GM12878 (cell line): ENCODE measurements at regions of chr1 and their contacts with region 1.

Region 1: DNA sequence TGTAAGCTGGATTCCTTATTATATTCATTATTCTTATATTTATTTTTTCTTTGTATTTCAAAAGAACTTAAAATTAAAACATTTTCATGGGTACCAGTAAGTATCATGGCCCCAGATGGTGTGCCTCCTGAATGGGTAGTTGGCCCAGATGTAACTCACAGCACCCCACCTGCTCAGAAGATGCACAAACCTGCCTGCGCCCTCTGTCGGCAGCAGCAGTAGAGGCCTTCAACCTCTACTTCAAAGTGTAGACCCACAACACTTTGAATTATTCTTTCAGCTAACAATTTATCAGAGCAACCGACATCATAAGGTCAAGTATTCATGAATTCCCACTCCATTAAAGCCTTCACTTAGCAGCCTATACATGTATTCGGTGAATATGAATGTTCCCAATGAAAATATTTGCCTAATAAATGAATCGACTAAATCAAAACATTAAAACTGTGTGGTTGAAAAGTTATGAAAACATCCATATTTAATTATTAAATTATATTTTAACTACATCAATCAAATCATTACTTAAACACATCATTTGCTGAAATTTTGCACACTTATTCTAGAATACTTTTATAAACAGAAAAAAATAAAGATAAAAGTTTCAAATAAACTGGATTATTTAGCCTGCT is 25.4 kb downstream of the PIGM start:
- DNase-seq: no peak
- ATAC-seq: peak; percentile 98
- H3K4me3 ChIP-seq: no peak overlapping the region
- H3K27ac ChIP-seq: no peak overlapping the region
- H3K4me1 ChIP-seq: no peaks in the 10 kb centered on the region
- H3K27me3 ChIP-seq: no peaks in the 10 kb centered on the region; a peak in 1 of 4 replicates
- CTCF ChIP-seq: peak; percentile 84 to 94 (median 94)
- EP300 ChIP-seq: no peak
- POLR2A ChIP-seq: no peak
- RAD21 ChIP-seq: peak; percentile 70

Region 2: GRCh38 chr1:159161001-159161718 is 845.3 kb before region 1 on chr1:
- CTCF ChIA-PET with region 1: interaction called, 3 read pairs
- POLR2A ChIA-PET with region 1: no interaction called
- RAD21 ChIA-PET with region 1: interaction called, 3 read pairs
- SMC1A ChIA-PET with region 1: no interaction called
- in situ Hi-C with region 1: no loop called
- intact Hi-C with region 1: loop called (anchors 2 kb)
- DNase-seq: peak; percentile 51
- ATAC-seq: peak; percentile 99
- H3K4me3 ChIP-seq: no peak overlapping the region
- H3K27ac ChIP-seq: no peak overlapping the region
- H3K4me1 ChIP-seq: peaks cover 3% of the 10 kb centered on the region; the same call in 1 of the 2 replicates
- H3K27me3 ChIP-seq: peaks cover 0 to 2% of the 10 kb centered on the region in 2 experiments; a peak in 1 of 4 replicates
- CTCF ChIP-seq: peak; percentile 94 to 100 (median 99); a peak in 5 of 6 replicates
- EP300 ChIP-seq: no peak
- POLR2A ChIP-seq: no peak
- RAD21 ChIP-seq: peak; percentile 100

Region 3: GRCh38 chr1:159798893-159799292 is 207.5 kb before region 1 on chr1:
- CTCF ChIA-PET with region 1: interaction called, 147 read pairs
- POLR2A ChIA-PET with region 1: no interaction called
- RAD21 ChIA-PET with region 1: interaction called, 50 read pairs
- SMC1A ChIA-PET with region 1: interaction called, 65 read pairs
- in situ Hi-C with region 1: loop called (anchors 5 kb)
- intact Hi-C with region 1: loop called (anchors 1 kb)
- DNase-seq: no peak
- ATAC-seq: peak; percentile 82
- H3K4me3 ChIP-seq: no peak overlapping the region
- H3K27ac ChIP-seq: no peak overlapping the region
- H3K4me1 ChIP-seq: peaks cover 9% of the 10 kb centered on the region
- H3K27me3 ChIP-seq: peaks cover 3% of the 10 kb centered on the region in 2 experiments
- CTCF ChIP-seq: peak; percentile 68 to 77 (median 71)
- EP300 ChIP-seq: no peak
- POLR2A ChIP-seq: no peak
- RAD21 ChIP-seq: peak; percentile 78

Region 4: GRCh38 chr1:159924981-159925712 is 81.3 kb before region 1 on chr1 and contains the start of gene TAGLN2:
- CTCF ChIA-PET with region 1: interaction called, 422 read pairs
- POLR2A ChIA-PET with region 1: interaction called, 3 read pairs
- RAD21 ChIA-PET with region 1: interaction called, 113 read pairs
- SMC1A ChIA-PET with region 1: interaction called, 57 read pairs
- in situ Hi-C with region 1: no loop called
- intact Hi-C with region 1: no loop called
- DNase-seq: peak; percentile 60
- ATAC-seq: peak; percentile 73
- H3K4me3 ChIP-seq: peak within 1 kb of the TSS; percentile 82
- H3K27ac ChIP-seq: peak within 1 kb of the TSS; percentile 82
- H3K4me1 ChIP-seq: peaks cover 32% of the 10 kb centered on the region
- H3K27me3 ChIP-seq: no peaks in the 10 kb centered on the region
- CTCF ChIP-seq: no peak
- EP300 ChIP-seq: no peak
- POLR2A ChIP-seq: peak; percentile 99
- RAD21 ChIP-seq: no peak
- polyA plus RNA-seq, gene TAGLN2: 216 to 262 TPM

Region 5: DNA sequence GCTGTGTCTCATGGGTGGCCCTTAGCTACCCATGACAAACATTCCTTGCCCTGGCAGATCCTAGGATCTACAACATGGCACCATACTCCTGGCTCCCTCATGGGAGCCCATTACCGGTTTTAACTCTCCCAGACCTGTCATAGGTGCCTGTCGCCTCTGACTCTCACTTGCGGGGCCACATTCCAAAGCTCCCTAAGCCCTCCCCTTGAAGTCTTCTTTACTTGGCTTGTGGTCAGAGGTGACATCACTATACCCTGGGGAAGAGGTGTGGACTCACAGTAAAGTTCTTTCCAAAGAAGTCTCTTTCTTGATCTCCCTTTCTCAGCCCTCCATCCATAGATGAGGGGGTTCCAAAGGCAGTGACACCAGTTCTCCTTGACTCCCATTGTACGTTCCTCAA is 47.0 kb before region 1 on chr1:
- CTCF ChIA-PET with region 1: interaction called, 22 read pairs
- POLR2A ChIA-PET with region 1: no interaction called
- RAD21 ChIA-PET with region 1: interaction called, 4 read pairs
- SMC1A ChIA-PET with region 1: interaction called, 13 read pairs
- in situ Hi-C with region 1: no loop called
- intact Hi-C with region 1: no loop called
- DNase-seq: no peak
- ATAC-seq: no peak
- H3K4me3 ChIP-seq: no peak overlapping the region
- H3K27ac ChIP-seq: no peak overlapping the region
- H3K4me1 ChIP-seq: peaks cover 13% of the 10 kb centered on the region
- H3K27me3 ChIP-seq: peaks cover 2 to 4% of the 10 kb centered on the region in 2 experiments; a peak in 3 of 4 replicates
- CTCF ChIP-seq: no peak
- EP300 ChIP-seq: no peak
- POLR2A ChIP-seq: no peak
- RAD21 ChIP-seq: no peak

Region 6: GRCh38 chr1:160046494-160047110 is 40.2 kb after region 1 on chr1:
- CTCF ChIA-PET with region 1: interaction called, 32 read pairs
- POLR2A ChIA-PET with region 1: no interaction called
- RAD21 ChIA-PET with region 1: no interaction called
- SMC1A ChIA-PET with region 1: interaction called, 4 read pairs
- in situ Hi-C with region 1: no loop called
- intact Hi-C with region 1: no loop called
- DNase-seq: no peak
- ATAC-seq: peak; percentile 96
- H3K4me3 ChIP-seq: 0 out of 2 replicates have a peak overlapping the region, but pooled peaks have one; percentile 16
- H3K27ac ChIP-seq: no peak overlapping the region
- H3K4me1 ChIP-seq: peaks cover 11% of the 10 kb centered on the region
- H3K27me3 ChIP-seq: no peaks in the 10 kb centered on the region; a peak in 3 of 4 replicates
- CTCF ChIP-seq: peak; percentile 54 to 65 (median 61)
- EP300 ChIP-seq: no peak
- POLR2A ChIP-seq: no peak
- RAD21 ChIP-seq: peak; percentile 78